ENCODE measurements at regions of chr1 and their contacts with region 1.

Region 1: GRCh38 chr1:204162231-204163074 is 3.7 kb downstream of the REN start:
- DNase-seq: peak; percentile 73 to 89 (median 85)
- H3K4me3 ChIP-seq: no peak overlapping the region
- H3K27ac ChIP-seq: no peak overlapping the region
- H3K4me1 ChIP-seq: no peaks in the 10 kb centered on the region
- H3K27me3 ChIP-seq: no peaks in the 10 kb centered on the region
- CTCF ChIP-seq: peak; percentile 89 to 95 (median 94)
- EP300 ChIP-seq: no peak
- POLR2A ChIP-seq: no peak

Region 2: DNA sequence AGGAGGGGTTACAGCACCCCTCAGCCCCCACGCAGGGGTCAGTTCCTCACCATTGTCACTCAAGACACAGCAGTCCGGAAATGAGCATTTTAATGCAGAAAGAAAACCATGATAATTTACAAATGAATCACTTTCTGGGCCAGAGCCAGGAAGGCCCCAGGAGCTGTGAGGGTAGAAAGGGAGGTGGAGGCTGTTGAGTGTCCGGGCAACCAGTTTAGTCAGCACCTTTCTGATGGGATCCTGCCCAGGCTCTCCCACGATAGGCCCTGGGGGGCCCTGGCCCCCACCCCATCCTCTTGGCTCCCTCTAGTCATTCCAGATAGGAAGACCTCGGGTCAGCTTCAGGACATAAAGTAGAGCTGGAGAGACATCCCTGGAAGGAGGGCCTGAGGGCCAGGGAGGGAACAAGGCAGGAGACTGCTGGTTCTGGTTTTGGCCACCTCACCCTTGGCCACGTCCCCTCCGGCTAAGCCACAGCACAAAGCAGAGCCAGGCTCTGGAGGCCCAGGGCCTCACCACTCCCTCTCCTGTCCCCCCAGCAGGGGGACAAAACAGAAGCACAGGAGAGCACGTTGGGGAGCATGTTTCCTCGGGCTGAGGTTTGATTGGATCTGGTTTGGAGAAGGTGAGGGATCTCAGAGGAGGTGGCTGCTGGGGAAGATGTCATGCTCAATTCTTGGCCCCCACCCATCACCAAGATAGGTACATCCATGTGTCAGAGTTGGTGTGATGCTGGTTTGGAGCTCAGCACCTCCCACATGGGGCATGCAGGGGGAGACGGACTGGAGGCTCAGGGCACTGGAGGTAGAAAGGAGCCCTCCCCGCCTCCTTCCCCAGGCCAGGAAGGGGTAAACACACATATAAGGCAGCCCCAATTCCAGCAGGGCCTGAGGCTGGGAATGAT is 31.2 kb before region 1 on chr1:
- intact Hi-C with region 1: no loop called
- DNase-seq: peak; percentile 77 to 87 (median 84)
- H3K4me3 ChIP-seq: no peak overlapping the region
- H3K27ac ChIP-seq: peak overlapping the region; percentile 0 to 66
- H3K4me1 ChIP-seq: peaks cover 17% of the 10 kb centered on the region
- H3K27me3 ChIP-seq: no peaks in the 10 kb centered on the region
- CTCF ChIP-seq: no peak
- EP300 ChIP-seq: no peak
- POLR2A ChIP-seq: no peak

Region 3: GRCh38 chr1:204207136-204207616 is 44.7 kb after region 1 on chr1:
- intact Hi-C with region 1: loop called in 1 of 4 experiments (anchors 5 kb)
- DNase-seq: peak; percentile 54 to 77 (median 75)
- H3K4me3 ChIP-seq: no peak overlapping the region
- H3K27ac ChIP-seq: no peak overlapping the region
- H3K4me1 ChIP-seq: peaks cover 1% of the 10 kb centered on the region
- H3K27me3 ChIP-seq: no peaks in the 10 kb centered on the region
- CTCF ChIP-seq: peak; percentile 66 to 75 (median 72)
- EP300 ChIP-seq: no peak
- POLR2A ChIP-seq: no peak

Region 4: DNA sequence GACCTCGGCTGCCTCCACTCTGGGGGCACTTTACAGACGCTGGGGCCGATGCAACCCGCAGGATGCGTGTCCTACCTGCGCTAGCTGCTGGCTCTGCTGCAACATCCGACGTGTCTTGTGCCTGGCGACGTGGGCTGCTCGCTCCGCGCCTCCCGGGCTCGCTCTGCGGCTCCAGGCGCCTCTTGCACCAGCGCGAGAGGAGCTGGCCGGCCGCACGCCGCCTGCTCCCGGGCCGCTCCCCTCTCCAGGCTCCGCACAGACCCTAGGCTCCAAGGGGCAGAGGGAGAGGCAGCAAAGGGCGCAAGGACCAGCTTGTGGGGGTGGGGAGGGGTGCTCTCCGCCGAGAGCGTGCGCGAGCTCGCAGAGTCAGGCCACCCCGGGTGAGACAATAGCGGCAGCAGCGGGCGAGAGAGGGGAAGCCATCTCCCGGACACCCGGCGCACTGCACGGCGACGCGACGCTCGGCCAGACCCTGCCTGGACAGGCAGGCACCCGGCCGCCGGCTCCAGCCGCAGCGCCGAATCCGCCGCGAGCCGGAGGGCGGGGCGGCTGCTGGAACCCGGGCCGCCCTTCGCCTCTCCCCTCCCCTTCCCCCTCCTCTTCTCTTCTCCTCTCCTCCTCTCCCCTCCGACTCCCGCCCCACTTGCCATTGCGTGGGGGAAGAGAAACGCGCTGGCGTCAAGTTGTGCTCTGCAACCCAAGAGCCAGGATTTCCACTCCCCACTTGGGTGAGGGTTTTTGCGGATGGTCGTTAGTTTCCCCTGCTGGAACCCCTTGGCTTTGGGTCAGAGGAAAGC is 332.0 kb after region 1 on chr1 and contains the start of gene PIK3C2B:
- intact Hi-C with region 1: loop called in 1 of 4 experiments (anchors 10 kb)
- DNase-seq: peak; percentile 52 to 76 (median 71)
- H3K4me3 ChIP-seq: peak within 1 kb of the TSS; percentile 76
- H3K27ac ChIP-seq: peak within 1 kb of the TSS; percentile 61
- H3K4me1 ChIP-seq: peaks cover 10% of the 10 kb centered on the region
- H3K27me3 ChIP-seq: no peaks in the 10 kb centered on the region
- CTCF ChIP-seq: peak in 2 of 3 donors; percentile 56 to 73
- EP300 ChIP-seq: no peak
- POLR2A ChIP-seq: peak; percentile 9
- total RNA-seq, gene PIK3C2B: 5.6 to 26.0 (median 12.8) TPM